ENCODE measurements at regions of chr2 and their contacts with region 1.

Region 1: DNA sequence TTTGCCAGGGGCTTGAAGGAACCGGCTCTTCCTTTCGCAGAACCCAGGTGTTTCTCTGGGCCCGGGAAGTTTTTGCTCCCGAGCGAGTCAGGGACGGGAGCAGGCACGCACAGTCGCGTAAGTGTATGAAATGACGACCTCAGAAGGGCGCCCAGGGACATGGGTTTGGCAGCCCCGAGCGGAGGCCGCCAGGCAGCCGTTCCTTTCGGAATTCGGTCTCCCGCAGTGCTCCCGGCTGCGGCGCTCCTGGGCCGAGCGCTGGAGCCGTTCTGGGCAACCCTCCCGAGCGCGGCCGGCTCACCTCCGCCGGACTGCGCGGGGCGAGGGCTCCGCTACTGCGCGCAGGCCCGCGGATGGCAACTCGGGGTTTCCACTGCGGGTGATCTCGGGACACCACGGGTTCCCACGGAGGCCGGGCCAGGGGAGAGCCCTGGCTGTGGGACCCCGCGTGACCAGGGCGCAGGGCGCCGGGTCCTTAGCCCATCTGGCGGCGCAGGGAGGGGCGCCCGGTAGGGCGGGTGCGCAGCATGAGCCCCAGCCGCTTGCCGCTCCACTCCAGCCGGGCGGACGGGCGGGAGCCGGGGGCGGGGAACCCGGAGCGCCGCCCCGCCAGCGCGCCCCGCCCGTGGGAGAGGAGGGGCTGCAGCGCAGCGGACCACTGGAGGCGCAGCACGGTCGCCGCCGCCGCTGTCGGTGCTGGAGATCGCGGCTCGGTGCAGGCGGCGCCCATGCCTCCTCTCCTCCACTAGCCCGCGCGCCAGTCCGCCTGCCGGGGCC is at the start of gene OSBPL6:
- DNase-seq: peak; percentile 84 to 91 (median 86)
- ATAC-seq: peak; percentile 91 to 98 (median 96)
- H3K4me3 ChIP-seq: peak within 1 kb of the TSS; percentile 56 to 98 (median 88)
- H3K27ac ChIP-seq: peak within 1 kb of the TSS; percentile 80 to 98 (median 92)
- H3K4me1 ChIP-seq: peaks cover 0 to 23% (median 13%) of the 10 kb centered on the region in 12 donors
- H3K27me3 ChIP-seq: peaks cover 0 to 30% (median 0%) of the 10 kb centered on the region in 9 donors
- CTCF ChIP-seq: peak in 9 of 12 donors; percentile 21 to 54 (median 32)
- POLR2A ChIP-seq: peak; percentile 36 to 78
- total RNA-seq, gene OSBPL6: 3.0 to 9.6 (median 5.0) TPM

Region 2: DNA sequence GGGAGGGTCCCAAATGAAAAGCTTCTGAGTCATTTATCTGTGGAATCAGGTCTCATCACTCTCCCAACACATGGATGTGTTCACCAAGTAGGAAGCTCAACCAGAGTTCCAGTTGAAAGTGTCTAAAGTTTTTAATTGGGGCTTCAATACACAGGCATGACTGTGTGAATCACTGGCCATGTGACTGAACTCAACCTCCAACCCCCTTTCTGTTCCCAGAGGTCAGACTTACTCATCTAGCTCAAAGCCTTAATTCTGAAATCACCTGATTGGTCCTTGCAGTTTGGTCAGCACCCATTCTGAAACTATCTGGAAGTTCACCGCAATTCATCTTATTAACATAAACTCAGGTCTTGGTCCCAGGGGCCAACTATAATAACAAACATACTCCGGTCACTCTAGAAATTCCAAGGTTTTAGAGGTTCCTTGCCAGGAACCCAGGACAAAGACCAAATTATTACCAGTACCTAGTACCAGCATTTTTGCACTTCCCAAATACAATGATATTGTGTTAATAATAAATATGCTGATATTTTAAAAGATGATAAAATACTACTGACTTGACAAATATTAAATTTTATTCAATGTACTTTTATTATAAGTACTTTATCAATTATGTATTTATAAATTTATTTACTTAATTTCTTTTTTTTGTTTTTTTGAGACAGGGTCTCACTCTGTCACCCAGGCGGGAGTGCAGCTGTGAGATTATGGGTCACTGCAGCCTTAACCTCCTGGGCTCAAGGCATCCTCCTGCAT is 92.5 kb before region 1 on chr2:
- intact Hi-C with region 1: no loop called
- DNase-seq: no peak
- ATAC-seq: no peak
- H3K4me3 ChIP-seq: no peak overlapping the region
- H3K27ac ChIP-seq: no peak overlapping the region
- H3K4me1 ChIP-seq: no peaks in the 10 kb centered on the region
- H3K27me3 ChIP-seq: no peaks in the 10 kb centered on the region
- CTCF ChIP-seq: no peak
- POLR2A ChIP-seq: no peak

Region 3: DNA sequence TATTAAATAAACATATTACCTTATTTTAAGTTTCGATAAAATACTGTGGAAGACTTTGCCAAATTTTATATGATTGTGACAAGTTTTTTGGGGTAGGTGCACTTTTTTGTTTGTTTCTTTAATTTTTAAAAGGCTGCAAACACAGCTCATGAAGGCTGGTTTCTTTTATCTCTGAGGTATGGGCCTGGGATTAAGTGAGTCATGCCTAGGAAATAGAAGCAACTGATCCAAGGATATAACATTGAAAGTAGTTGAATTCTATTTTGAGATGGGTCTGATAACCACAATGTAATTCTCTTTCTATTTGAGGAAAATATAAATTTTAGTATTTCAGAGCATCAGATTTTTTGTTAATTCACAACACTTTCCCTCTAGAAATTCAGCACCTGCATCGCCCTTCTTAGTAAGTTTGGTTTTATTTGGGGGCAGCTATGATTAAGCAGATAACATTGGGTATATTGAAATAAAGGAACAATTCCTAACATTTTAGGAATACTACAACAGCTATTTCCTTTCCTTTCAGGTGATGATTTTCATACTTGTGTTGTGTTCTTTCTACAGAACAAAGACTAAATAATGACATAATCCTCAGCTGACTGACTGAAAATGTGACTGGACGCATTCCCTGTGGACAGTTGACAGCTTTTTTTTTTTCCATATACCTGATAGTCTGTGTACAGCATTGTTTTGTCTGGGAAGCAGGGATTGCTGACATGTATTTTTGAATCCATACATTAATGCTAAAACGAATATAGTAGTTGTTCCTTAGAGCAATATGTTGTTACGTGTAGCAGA is 65.0 kb before region 1 on chr2:
- intact Hi-C with region 1: loop called in 2 of 10 experiments (anchors 5 to 10 kb)
- DNase-seq: no peak
- ATAC-seq: no peak
- H3K4me3 ChIP-seq: no peak overlapping the region
- H3K27ac ChIP-seq: no peak overlapping the region
- H3K4me1 ChIP-seq: peaks cover 0 to 4% (median 0%) of the 10 kb centered on the region in 12 donors
- H3K27me3 ChIP-seq: no peaks in the 10 kb centered on the region
- CTCF ChIP-seq: no peak
- POLR2A ChIP-seq: no peak

Region 4: GRCh38 chr2:178136321-178137025 is 57.5 kb before region 1 on chr2:
- intact Hi-C with region 1: loop called in 3 of 10 experiments (anchors 5 to 10 kb)
- DNase-seq: no peak
- ATAC-seq: no peak
- H3K4me3 ChIP-seq: no peak overlapping the region
- H3K27ac ChIP-seq: no peak overlapping the region
- H3K4me1 ChIP-seq: peaks cover 0 to 3% (median 0%) of the 10 kb centered on the region in 12 donors
- H3K27me3 ChIP-seq: no peaks in the 10 kb centered on the region
- CTCF ChIP-seq: no peak
- POLR2A ChIP-seq: no peak

Region 5: DNA sequence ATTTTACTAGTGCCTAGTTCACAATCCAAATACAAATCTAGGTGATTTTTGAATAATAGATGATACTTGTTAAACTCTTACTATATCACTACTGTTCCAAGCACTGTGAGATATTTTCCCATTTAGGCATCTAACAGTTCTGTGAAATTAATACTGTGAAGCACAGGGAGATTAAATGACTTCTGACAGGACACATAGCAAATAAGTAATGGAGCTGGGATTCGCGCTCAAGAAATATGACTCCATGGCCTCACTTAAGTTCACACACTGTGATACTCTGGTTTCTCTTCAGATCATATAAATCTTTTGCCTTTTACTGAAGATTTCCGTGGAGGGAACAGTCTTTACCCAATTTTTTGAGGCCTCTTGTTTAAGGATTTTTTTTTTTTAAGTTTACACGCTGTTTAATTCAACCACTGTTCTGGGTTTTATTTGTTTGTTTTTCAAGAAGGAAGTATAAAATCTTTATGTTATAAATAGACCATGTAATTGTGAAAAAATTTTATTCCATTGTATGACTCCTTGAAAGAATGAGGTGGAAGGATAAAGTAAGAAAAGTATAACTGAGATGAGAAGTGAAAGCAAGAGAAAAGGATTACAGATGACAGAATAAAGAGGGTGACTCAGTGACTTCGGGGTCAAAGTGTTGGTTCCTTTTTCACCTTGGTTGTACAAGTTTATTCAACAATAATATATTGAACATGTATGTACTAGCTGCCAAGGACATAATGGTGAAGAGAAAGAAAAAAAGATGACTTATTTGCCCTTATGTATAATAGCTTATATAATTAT is 51.5 kb before region 1 on chr2:
- intact Hi-C with region 1: loop called in 2 of 10 experiments (anchors 10 kb)
- DNase-seq: no peak
- ATAC-seq: no peak
- H3K4me3 ChIP-seq: no peak overlapping the region
- H3K27ac ChIP-seq: no peak overlapping the region
- H3K4me1 ChIP-seq: no peaks in the 10 kb centered on the region
- H3K27me3 ChIP-seq: peaks cover 0 to 8% (median 0%) of the 10 kb centered on the region in 9 donors
- CTCF ChIP-seq: no peak
- POLR2A ChIP-seq: no peak

Region 6: GRCh38 chr2:178241844-178242551 is 48.0 kb after region 1 on chr2:
- intact Hi-C with region 1: loop called in 1 of 10 experiments (anchors 10 kb)
- DNase-seq: peak in 4 of 5 donors; percentile 41 to 69 (median 56)
- ATAC-seq: peak; percentile 52 to 87 (median 82)
- H3K4me3 ChIP-seq: no peak overlapping the region
- H3K27ac ChIP-seq: peak overlapping the region in 7 of 12 donors; percentile 1 to 58 (median 32)
- H3K4me1 ChIP-seq: peaks cover 0 to 30% (median 13%) of the 10 kb centered on the region in 12 donors
- H3K27me3 ChIP-seq: no peaks in the 10 kb centered on the region
- CTCF ChIP-seq: no peak
- POLR2A ChIP-seq: no peak

Region 7: GRCh38 chr2:178271629-178272333 is 77.8 kb after region 1 on chr2:
- intact Hi-C with region 1: loop called in 7 of 10 experiments (anchors 2 to 10 kb)
- DNase-seq: peak; percentile 79 to 93 (median 85)
- ATAC-seq: peak; percentile 94 to 95 (median 94)
- H3K4me3 ChIP-seq: no peak overlapping the region
- H3K27ac ChIP-seq: peak overlapping the region in 11 of 12 donors; percentile 18 to 79 (median 68)
- H3K4me1 ChIP-seq: peaks cover 0 to 33% (median 8%) of the 10 kb centered on the region in 12 donors
- H3K27me3 ChIP-seq: no peaks in the 10 kb centered on the region
- CTCF ChIP-seq: no peak
- POLR2A ChIP-seq: no peak

Region 8: DNA sequence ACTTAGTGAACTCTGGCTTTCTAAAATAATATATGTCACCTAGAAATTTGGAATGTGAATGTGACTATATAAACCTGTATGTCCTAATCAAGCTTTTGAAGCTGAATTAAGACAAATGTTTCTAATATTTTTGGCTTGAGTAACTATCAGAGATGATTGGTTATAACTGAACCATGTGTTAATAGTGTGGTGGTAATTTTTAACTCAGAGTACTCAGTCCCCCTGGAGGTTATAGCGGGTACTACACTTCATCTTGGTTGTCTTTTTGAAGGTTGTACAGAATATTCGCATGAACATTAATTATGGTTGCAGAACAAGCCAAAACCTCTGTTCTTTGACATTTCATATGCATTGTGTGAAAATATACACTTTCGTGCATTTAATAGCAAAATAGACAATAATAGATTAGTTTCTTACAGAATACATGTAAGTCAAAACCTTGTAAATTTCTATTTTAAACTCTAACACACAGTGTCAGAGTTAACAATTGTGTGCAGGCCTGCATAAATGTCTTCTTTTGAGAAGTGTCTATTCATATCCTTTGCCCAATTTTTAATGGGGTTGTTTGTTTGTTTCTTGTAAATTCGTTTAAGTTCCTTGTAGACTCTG is 86.3 kb after region 1 on chr2:
- intact Hi-C with region 1: loop called in 4 of 10 experiments (anchors 2 to 10 kb)
- DNase-seq: peak in 2 of 5 donors; percentile 21 to 27
- ATAC-seq: peak in 3 of 4 donors; percentile 44 to 58 (median 57)
- H3K4me3 ChIP-seq: no peak overlapping the region
- H3K27ac ChIP-seq: no peak overlapping the region
- H3K4me1 ChIP-seq: peaks cover 0 to 13% (median 0%) of the 10 kb centered on the region in 12 donors
- H3K27me3 ChIP-seq: no peaks in the 10 kb centered on the region
- CTCF ChIP-seq: peak; percentile 69 to 92 (median 78)
- POLR2A ChIP-seq: no peak